AG04450 (cell line): ENCODE measurements at regions of chr18 and their contacts with region 1.

Region 1: DNA sequence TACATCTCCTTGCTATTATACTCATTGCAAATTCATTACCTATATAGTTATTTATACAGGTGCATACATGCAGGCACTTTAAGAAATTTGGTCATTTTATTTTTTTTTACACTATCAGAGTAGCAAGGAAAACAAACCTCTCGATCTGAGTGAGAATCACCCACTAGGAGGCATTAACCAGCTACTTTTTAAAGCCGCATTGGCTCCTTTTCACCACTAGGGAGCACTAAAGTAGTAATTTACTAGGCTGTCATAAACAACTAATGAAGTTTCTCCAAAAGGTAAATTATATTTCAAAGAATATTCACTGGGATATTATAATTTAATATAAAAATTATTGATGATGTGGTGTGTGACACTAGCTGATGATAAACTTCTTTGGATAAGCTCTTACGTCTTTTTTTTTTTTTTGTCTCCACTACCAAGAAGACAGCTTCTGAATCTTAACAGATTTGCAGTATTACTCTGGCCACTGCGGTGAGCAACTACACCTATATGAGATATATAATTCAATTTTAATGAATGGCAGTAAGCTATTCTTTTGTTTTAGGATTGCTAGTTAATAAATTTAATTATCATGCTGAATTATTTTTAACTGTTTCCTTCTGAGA is 101.9 kb downstream of the NOL4 start:
- DNase-seq: peak; percentile 21
- H3K4me3 ChIP-seq: no peak overlapping the region
- H3K27ac ChIP-seq: no peak overlapping the region
- H3K27me3 ChIP-seq: no peaks in the 10 kb centered on the region
- CTCF ChIP-seq: peak; percentile 97

Region 2: GRCh38 chr18:34108206-34108605 is 14.6 kb before region 1 on chr18:
- CTCF ChIA-PET with region 1: interaction called, 11 read pairs
- POLR2A ChIA-PET with region 1: no interaction called
- DNase-seq: no peak
- H3K4me3 ChIP-seq: no peak overlapping the region
- H3K27ac ChIP-seq: no peak overlapping the region
- H3K27me3 ChIP-seq: no peaks in the 10 kb centered on the region
- CTCF ChIP-seq: no peak

Region 3: GRCh38 chr18:34207344-34207851 is 84.6 kb after region 1 on chr18:
- CTCF ChIA-PET with region 1: interaction called, 10 read pairs
- POLR2A ChIA-PET with region 1: no interaction called
- DNase-seq: no peak
- H3K4me3 ChIP-seq: no peak overlapping the region
- H3K27ac ChIP-seq: no peak overlapping the region
- H3K27me3 ChIP-seq: no peaks in the 10 kb centered on the region
- CTCF ChIP-seq: no peak

Region 4: DNA sequence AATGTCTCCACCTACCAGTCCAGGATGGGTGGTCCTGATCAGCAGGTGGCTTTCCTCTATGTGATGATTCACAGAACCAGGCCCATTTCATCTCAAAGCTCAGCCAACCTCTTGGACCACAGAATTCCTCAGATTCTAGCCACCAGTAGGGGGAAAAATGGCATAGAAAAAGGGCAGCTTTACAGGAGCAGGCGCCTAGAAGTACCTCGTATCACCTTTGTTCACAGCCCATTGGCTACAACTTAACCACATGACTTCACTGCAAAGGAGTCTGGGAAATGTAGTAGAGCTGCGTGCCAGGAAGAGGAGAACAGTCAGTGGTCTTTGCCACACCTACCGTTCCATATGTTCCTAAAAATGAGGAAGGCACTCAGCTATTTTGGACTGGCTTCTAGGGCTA is 524.4 kb after region 1 on chr18:
- CTCF ChIA-PET with region 1: interaction called, 18 read pairs
- POLR2A ChIA-PET with region 1: no interaction called
- DNase-seq: no peak
- H3K4me3 ChIP-seq: no peak overlapping the region
- H3K27ac ChIP-seq: no peak overlapping the region
- H3K27me3 ChIP-seq: no peaks in the 10 kb centered on the region
- CTCF ChIP-seq: no peak

Region 5: GRCh38 chr18:34809451-34810072 is 686.7 kb after region 1 on chr18:
- CTCF ChIA-PET with region 1: interaction called, 16 read pairs
- POLR2A ChIA-PET with region 1: no interaction called
- DNase-seq: no peak
- H3K4me3 ChIP-seq: no peak overlapping the region
- H3K27ac ChIP-seq: no peak overlapping the region
- H3K27me3 ChIP-seq: no peaks in the 10 kb centered on the region
- CTCF ChIP-seq: peak; percentile 44